Common myeloid progenitor, CD34-positive (primary cell): ENCODE measurements at regions of chr14 and their contacts with region 1.

Region 1: DNA sequence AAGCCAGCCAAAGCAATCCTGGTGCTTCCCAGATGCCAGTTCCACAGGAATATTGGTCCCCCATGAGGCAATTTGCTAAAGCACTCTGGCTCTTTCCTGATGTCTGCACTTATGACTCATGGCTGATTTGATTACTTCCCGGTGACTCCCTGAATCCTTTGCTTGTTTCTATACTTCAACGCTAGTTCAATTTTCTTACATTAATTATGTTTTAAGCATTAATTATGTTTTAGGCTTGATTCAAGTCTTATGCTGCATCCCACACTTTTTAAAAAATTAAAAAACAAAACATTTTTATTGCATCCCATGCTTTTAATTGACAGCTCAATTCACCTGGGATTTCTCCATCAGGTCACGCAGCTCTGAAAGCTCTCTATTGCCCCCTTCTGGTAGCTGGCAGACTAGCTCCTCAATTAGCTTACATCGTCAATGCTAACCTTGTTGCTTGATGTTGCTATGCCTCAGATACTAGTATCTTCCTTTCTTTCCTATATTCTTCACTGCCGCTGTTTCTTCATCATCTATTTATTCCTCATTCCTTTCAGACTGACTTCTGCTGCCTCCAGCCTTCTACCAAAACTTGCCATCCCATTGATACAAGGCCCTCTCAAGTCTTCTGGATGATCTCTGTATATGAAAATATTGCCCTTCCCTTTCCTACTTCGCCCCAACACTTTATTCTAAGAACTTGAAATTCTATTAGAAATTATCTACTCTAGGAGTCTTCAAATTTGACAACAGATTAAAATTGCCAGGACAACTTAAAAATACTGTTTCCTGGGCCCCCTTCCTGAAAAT is 32.0 kb downstream of the TSHR start:
- DNase-seq: peak; percentile 60 to 78 (median 69)
- H3K4me3 ChIP-seq: no peak overlapping the region
- H3K27ac ChIP-seq: no peak overlapping the region
- H3K4me1 ChIP-seq: no peaks in the 10 kb centered on the region
- H3K27me3 ChIP-seq: peaks cover 0 to 3% (median 0%) of the 10 kb centered on the region in 5 experiments

Region 2: GRCh38 chr14:80954687-80955299 is 32.6 kb before region 1 on chr14:
- CTCF ChIA-PET with region 1: interaction called, 13 read pairs
- POLR2A ChIA-PET with region 1: no interaction called
- DNase-seq: peak; percentile 70 to 83 (median 83)
- H3K4me3 ChIP-seq: peak overlapping the region; percentile 3 to 83 (median 68)
- H3K27ac ChIP-seq: no peak overlapping the region
- H3K4me1 ChIP-seq: peaks cover 0 to 11% (median 9%) of the 10 kb centered on the region in 4 experiments
- H3K27me3 ChIP-seq: peaks cover 0 to 9% (median 6%) of the 10 kb centered on the region in 5 experiments

Region 3: GRCh38 chr14:80973931-80974641 is 13.3 kb before region 1 on chr14:
- CTCF ChIA-PET with region 1: interaction called, 59 read pairs
- POLR2A ChIA-PET with region 1: no interaction called
- DNase-seq: no peak
- H3K4me3 ChIP-seq: no peak overlapping the region
- H3K27ac ChIP-seq: no peak overlapping the region
- H3K4me1 ChIP-seq: no peaks in the 10 kb centered on the region
- H3K27me3 ChIP-seq: peaks cover 0 to 12% (median 0%) of the 10 kb centered on the region in 5 experiments

Region 4: GRCh38 chr14:81001447-81001846 is 14.0 kb after region 1 on chr14:
- CTCF ChIA-PET with region 1: interaction called, 32 read pairs
- POLR2A ChIA-PET with region 1: no interaction called
- DNase-seq: no peak
- H3K4me3 ChIP-seq: no peak overlapping the region
- H3K27ac ChIP-seq: no peak overlapping the region
- H3K4me1 ChIP-seq: peaks cover 0 to 2% (median under 1%) of the 10 kb centered on the region in 4 experiments
- H3K27me3 ChIP-seq: peaks cover 0 to 8% (median 2%) of the 10 kb centered on the region in 5 experiments